PC-3 (cell line): ENCODE measurements at regions of chr9 and their contacts with region 1.

Region 1: GRCh38 chr9:19946441-19947109 is 157.7 kb upstream of the SLC24A2 start:
- DNase-seq: peak; percentile 39
- ATAC-seq: peak; percentile 63
- H3K4me3 ChIP-seq: no peak overlapping the region
- H3K27ac ChIP-seq: no peak overlapping the region
- H3K4me1 ChIP-seq: no peaks in the 10 kb centered on the region
- H3K27me3 ChIP-seq: peaks cover 23% of the 10 kb centered on the region
- CTCF ChIP-seq: peak; percentile 54; the same call in 1 of the 2 replicates

Region 2: DNA sequence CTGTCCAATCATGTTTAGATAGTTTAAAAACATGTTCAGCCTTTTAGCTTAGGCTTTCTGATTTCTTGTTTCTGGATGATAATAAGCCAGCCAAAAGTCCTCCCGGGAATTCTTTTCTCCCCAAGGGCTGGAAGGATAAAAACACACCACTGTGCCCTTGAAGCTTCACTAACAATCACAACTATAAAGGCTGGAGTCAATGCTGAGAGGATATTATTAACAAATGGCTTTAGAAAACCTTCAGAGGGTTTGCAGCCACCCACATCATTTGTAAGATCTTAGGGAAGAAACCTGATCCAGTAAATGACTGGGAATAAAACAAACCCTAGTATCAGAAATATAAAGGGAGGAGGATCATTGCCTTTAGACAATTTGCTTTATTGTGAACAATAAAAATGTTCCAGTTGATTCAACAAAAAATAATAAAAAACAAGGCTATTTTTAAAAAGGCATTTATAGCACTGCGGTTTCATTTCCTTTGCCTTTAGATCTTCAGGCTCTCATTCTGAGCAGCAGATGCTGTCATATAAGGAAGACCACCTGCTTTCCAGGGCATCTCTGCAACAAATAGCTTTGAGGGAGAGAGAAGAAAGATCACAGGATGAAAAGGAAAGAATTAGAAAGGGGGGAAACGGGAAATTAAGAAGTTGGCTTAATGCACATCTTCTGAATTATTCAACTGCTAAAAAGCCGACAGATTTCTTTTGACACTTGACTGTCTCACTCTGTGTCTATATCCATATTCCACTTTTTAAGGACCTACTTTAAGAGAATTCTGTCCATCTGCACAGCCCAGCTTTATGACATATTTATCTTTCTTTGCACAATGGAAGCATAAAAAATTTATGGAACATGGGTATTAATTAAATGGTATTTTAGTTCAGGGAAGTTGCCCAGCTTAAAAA is 119.5 kb after region 1 on chr9:
- CTCF ChIA-PET with region 1: no interaction called
- POLR2A ChIA-PET with region 1: no interaction called
- intact Hi-C with region 1: loop called (anchors 10 kb)
- DNase-seq: no peak
- ATAC-seq: no peak
- H3K4me3 ChIP-seq: no peak overlapping the region
- H3K27ac ChIP-seq: no peak overlapping the region
- H3K4me1 ChIP-seq: no peaks in the 10 kb centered on the region
- H3K27me3 ChIP-seq: peaks cover 55% of the 10 kb centered on the region
- CTCF ChIP-seq: no peak

Region 3: DNA sequence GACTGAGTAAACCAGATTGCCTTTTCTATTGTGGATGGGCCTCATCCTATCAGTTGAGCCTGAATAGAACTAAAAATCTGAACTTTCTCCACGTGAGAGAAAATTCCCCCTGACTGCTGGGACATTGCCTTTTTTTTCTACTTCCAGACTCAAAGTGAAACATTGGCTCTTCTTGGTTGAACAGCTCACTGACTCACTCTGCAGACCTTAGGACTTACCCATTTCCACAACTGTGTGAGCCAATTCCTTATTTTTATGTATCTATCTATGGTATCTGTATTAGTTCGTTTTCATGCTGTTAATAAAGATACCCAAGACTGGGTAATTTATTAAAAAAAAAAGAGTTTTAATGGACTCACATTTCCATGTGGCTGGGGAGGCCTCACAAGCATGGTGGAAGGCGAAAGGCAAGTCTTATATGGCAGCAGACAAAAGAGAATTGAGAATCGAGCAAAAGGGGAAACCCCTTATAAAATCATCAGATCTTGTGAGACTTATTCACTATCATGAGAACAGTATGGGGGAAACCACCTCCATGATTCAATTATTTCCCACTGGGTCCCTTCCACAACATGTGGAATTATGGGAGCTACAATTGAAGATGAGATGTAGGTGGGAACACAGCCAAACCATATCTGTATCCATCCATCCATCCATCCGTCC is 149.0 kb after region 1 on chr9:
- CTCF ChIA-PET with region 1: interaction called, 11 read pairs
- POLR2A ChIA-PET with region 1: no interaction called
- intact Hi-C with region 1: no loop called
- DNase-seq: no peak
- ATAC-seq: no peak
- H3K4me3 ChIP-seq: no peak overlapping the region
- H3K27ac ChIP-seq: no peak overlapping the region
- H3K4me1 ChIP-seq: no peaks in the 10 kb centered on the region
- H3K27me3 ChIP-seq: no peaks in the 10 kb centered on the region
- CTCF ChIP-seq: no peak

Region 4: DNA sequence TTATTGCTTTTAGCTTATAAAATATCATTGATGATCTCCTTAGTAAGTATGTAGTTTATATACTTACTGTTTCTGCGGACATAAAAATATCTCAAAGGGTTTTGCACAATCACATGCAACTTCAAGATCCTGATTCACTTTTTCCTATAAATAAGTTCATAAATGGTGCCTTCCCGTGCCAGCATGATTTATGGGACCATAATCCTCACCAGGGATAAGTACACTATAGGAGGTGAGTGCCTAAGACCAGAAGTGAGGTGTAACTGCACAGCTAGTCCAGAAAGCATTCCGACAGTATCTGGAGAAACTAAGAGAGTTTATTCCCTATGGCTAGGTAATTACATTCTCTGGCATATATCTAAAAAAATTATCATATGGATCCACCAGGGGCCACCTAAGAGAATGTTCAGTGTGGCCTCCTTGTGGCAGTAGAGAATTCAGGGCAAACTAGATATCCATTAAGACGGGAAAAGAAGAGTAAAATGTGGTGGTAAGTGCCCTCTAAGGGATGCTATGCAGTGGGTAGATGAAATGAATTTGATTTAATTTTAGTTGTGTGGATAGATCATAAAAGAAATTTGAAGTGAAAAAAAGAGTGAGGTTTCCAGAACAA is 244.8 kb after region 1 on chr9:
- CTCF ChIA-PET with region 1: no interaction called
- POLR2A ChIA-PET with region 1: no interaction called
- intact Hi-C with region 1: loop called (anchors 5 kb)
- DNase-seq: peak; percentile 40
- ATAC-seq: peak; percentile 60
- H3K4me3 ChIP-seq: no peak overlapping the region
- H3K27ac ChIP-seq: no peak overlapping the region
- H3K4me1 ChIP-seq: no peaks in the 10 kb centered on the region
- H3K27me3 ChIP-seq: peaks cover 31% of the 10 kb centered on the region
- CTCF ChIP-seq: peak; percentile 54